ENCODE measurements at regions of chr5 and their contacts with region 1.

Region 1: GRCh38 chr5:6732634-6733410 is 19.6 kb downstream of the TENT4A start:
- DNase-seq: no peak
- ATAC-seq: no peak; a peak in 1 of 6 replicates
- H3K4me3 ChIP-seq: no peak overlapping the region
- H3K27ac ChIP-seq: 0 out of 6 replicates have a peak overlapping the region, but pooled peaks of 1 of the 2 experiments have one; percentile 20
- H3K4me1 ChIP-seq: peaks cover 39% of the 10 kb centered on the region
- CTCF ChIP-seq: no peak
- EP300 ChIP-seq: no peak
- POLR2A ChIP-seq: no peak
- RAD21 ChIP-seq: no peak

Region 2: GRCh38 chr5:6389397-6389796 is 343.4 kb before region 1 on chr5:
- CTCF ChIA-PET with region 1: no interaction called
- POLR2A ChIA-PET with region 1: interaction called, 10 read pairs
- DNase-seq: no peak
- ATAC-seq: no peak
- H3K4me3 ChIP-seq: no peak overlapping the region
- H3K27ac ChIP-seq: no peak overlapping the region
- H3K4me1 ChIP-seq: no peaks in the 10 kb centered on the region
- CTCF ChIP-seq: no peak
- EP300 ChIP-seq: no peak
- POLR2A ChIP-seq: no peak
- RAD21 ChIP-seq: no peak

Region 3: GRCh38 chr5:6745706-6746222 is 12.9 kb after region 1 on chr5:
- CTCF ChIA-PET with region 1: interaction called, 15 read pairs
- POLR2A ChIA-PET with region 1: no interaction called
- DNase-seq: peak; percentile 46 to 52
- ATAC-seq: peak; percentile 33 to 83; a peak in 3 of 6 replicates
- H3K4me3 ChIP-seq: no peak overlapping the region
- H3K27ac ChIP-seq: no peak overlapping the region
- H3K4me1 ChIP-seq: no peaks in the 10 kb centered on the region
- CTCF ChIP-seq: peak; percentile 70
- EP300 ChIP-seq: no peak
- POLR2A ChIP-seq: no peak
- RAD21 ChIP-seq: peak; percentile 67 to 68